Colonic mucosa (tissue), 4 donors: ENCODE measurements at regions of chrX and their contacts with region 1.

Region 1: DNA sequence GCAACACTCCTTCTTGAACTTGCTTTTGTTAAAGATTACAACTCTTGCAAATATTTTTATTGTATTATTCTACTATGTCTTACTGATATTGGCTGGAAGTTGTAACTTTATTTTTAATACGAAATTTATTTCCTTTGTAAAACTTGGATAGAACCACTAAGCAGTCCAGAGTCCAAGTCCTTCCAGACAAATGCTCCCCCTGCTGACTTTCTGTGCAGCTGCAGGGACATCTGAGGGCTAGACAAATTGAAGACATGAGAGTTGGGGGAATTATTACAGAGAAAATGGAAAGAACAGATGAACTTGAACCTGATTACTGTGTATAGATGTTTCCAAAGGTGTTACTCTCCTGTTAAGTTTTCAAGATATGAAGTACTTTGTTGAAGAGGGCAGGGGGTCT is 238.8 kb downstream of the GRIA3 start:
- DNase-seq: peak; percentile 17
- H3K4me3 ChIP-seq: no peak overlapping the region
- H3K27ac ChIP-seq: no peak overlapping the region
- H3K4me1 ChIP-seq: no peaks in the 10 kb centered on the region
- H3K27me3 ChIP-seq: no peaks in the 10 kb centered on the region
- CTCF ChIP-seq: peak; percentile 40

Region 2: DNA sequence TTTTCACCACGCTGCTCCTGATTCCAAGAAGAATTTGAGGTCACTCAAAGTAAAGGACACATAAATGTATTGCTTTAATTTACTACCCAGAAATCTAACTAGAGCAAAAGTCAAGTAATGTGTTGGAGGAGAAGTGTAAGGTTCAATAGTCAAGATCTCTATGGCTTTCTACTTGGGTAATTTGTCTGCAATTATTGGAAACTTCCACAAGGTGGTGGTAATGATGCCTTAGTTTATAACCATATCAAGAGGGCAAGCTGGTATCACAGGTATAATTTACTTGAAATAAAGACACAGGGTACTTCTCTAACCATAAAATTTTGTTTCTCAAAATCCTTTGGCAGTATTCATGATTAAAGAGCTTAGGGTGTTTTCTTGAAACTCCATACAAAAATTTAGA is 249.0 kb before region 1 on chrX:
- intact Hi-C with region 1: loop called (anchors 10 kb)
- DNase-seq: no peak
- H3K4me3 ChIP-seq: no peak overlapping the region
- H3K27ac ChIP-seq: no peak overlapping the region
- H3K4me1 ChIP-seq: no peaks in the 10 kb centered on the region
- H3K27me3 ChIP-seq: no peaks in the 10 kb centered on the region
- CTCF ChIP-seq: no peak